Left cardiac atrium (tissue), 4 donors: ENCODE measurements at regions of chr6 and their contacts with region 1.

Region 1: DNA sequence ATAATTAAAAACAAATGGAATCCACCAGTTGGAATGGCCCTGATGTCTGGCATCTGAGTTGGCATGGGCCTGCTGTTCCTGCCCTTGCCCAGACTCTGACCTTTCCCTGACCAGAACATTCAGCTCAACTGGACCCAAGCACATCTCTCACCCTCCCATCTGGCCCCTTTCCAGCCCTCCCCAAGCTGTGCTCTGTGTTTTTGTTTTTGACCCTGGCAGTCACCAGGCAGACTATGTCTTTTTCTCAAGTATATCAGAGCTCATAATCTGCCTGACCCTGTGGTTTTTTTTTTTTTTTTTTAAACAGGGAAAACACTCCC is 117.6 kb downstream of the TRDN start:
- DNase-seq: peak; percentile 81
- ATAC-seq: peak; percentile 92 to 93

Region 2: DNA sequence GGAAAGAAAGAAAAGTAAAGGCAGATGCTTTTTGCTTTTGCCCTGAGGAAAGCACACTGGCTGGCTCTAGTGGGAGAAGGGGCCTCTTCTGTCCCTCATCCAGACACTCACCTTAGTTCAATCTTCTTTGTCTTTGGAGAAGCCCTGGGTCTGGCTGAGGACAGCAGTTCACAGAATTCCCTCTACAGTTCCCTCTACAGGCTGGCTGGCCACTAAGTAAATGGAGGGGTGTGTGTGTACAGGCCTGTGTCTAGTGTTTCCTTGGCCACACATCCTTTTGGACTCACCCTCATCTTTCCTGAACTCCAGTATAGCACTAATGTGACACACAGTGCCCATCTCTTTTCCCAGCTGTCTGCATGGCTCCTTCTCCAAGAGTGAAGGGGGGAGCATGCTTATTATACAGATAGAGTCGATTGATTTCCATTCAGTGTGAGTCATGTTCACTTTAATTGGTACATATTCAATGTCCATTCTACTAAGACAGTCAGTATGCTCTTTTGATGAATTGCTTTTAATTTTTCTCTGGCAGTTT is 549.1 kb before region 1 on chr6:
- intact Hi-C with region 1: no loop called
- DNase-seq: no peak
- ATAC-seq: no peak

Region 3: GRCh38 chr6:123127807-123128206 is 391.3 kb before region 1 on chr6:
- intact Hi-C with region 1: no loop called
- DNase-seq: no peak
- ATAC-seq: no peak

Region 4: GRCh38 chr6:123598011-123598410 is 78.9 kb after region 1 on chr6:
- intact Hi-C with region 1: no loop called
- DNase-seq: no peak
- ATAC-seq: no peak

Region 5: GRCh38 chr6:123619156-123619555 is 100.0 kb after region 1 on chr6:
- intact Hi-C with region 1: no loop called
- DNase-seq: peak; percentile 18
- ATAC-seq: peak in 1 of 2 donors; percentile 78

Region 6: GRCh38 chr6:123636782-123637181 is 117.6 kb after region 1 on chr6 and contains the start of gene TRDN:
- intact Hi-C with region 1: loop called in 1 of 2 experiments (anchors 2 kb)
- DNase-seq: no peak
- ATAC-seq: peak; percentile 88 to 90
- total RNA-seq, gene TRDN: 174 to 207 TPM